Heart left ventricle (tissue), 16 donors: ENCODE measurements at regions of chr1 and their contacts with region 1.

Region 1: DNA sequence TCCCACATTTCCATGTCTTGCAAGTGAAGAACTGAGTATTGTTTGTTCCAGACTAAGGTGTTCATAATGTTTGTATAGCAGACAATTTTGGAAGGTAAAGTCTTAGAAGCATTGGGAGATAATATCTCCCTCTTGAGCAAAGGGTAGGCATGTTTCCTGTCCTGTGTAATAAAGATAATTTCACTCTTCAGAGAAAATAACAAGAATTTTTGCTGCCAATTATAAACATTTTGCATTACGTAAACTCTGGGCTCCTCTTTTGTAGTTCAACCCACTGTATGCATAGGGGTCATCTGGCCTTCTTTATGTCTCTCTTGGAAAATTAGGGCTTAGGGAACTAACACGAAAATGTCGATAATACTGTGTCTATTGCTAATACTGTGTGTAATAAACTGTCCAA is 56.6 kb upstream of the FMN2 start:
- DNase-seq: no peak
- ATAC-seq: no peak
- H3K4me3 ChIP-seq: no peak overlapping the region
- H3K27ac ChIP-seq: no peak overlapping the region
- H3K4me1 ChIP-seq: no peaks in the 10 kb centered on the region
- H3K27me3 ChIP-seq: peaks cover 0 to 4% (median 0%) of the 10 kb centered on the region in 9 donors
- CTCF ChIP-seq: no peak
- POLR2A ChIP-seq: no peak

Region 2: DNA sequence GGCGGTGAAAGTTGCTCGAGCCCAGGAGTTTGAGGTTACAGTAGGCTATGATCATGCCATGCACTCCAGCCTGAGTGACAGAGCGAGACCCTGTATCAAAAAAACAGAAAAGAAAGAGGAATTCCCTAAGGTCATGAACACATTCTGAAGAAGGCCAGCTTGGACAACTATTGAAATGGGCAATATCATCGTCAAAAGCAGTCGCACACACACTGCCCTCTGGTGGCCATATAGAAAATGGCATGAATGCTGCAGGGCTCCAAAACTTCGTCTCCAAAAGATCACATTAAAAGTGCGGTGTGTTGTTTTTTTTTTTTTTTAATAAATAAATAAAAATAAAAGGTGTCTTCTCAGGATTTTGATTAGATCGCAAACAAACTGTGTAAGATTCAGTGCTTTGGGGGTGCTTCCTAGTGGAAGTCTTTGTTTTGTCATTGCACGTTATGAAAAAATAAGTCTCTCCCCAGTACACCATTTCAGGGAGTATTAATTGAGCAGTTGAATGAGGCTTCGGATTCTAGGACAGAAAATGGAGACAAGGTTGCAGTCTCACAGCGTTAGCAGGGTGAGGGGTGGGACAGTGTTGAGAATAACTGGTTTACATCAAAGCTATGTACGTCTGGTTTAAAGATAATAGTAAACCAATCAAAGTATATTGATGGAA is 30.9 kb before region 1 on chr1:
- intact Hi-C with region 1: no loop called
- DNase-seq: no peak
- ATAC-seq: no peak
- H3K4me3 ChIP-seq: no peak overlapping the region
- H3K27ac ChIP-seq: no peak overlapping the region
- H3K4me1 ChIP-seq: no peaks in the 10 kb centered on the region
- H3K27me3 ChIP-seq: peaks cover 0 to 22% (median 11%) of the 10 kb centered on the region in 9 donors
- CTCF ChIP-seq: peak; percentile 42 to 67 (median 59)
- POLR2A ChIP-seq: no peak

Region 3: DNA sequence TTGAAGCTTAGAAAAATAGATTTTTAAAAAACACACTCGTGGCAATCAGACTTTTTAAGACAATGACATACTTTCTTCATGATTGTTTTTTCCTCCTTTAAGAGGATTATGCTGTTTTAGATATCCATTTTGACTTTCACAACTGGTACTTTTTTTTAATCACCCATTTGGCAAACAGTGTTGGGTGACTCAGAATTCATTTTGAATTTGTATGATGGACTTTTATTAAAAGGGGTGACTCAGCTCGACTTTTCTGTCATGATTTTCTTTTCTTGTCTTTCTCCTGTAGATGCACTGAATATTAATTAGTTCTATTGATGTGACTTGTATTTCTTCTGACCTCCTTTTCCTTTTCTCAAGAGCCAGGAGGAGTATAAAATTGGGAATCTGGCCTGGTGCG is 101.3 kb after region 1 on chr1:
- intact Hi-C with region 1: loop called in 2 of 10 experiments (anchors 5 to 10 kb)
- DNase-seq: no peak
- ATAC-seq: no peak
- H3K4me3 ChIP-seq: no peak overlapping the region
- H3K27ac ChIP-seq: no peak overlapping the region
- H3K4me1 ChIP-seq: no peaks in the 10 kb centered on the region
- H3K27me3 ChIP-seq: peaks cover 0 to 8% (median 0%) of the 10 kb centered on the region in 9 donors
- CTCF ChIP-seq: no peak
- POLR2A ChIP-seq: no peak